ENCODE measurements at regions of chr3 and their contacts with region 1.

Region 1: DNA sequence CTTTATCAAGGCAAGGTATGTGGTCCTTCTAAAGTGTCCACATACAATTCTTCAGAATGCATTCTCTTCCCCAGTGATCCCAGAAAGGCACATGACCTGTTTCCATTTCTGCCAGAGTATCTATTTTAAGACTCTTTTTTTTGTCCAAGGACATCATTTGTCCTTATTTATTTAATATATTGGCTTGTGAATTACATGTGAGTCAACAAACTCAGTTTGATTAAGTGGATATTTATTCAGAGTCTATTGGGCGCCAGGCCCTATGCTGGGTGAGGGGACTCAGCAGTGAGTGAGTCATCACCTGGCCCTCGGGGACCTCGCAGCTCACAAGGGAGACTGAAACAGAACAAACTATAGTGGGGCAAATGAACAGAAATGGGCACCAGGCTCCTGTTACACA is 136.8 kb downstream of the SNRK start:
- DNase-seq: peak; percentile 23 to 27
- ATAC-seq: peak in 6 of 8 donors; percentile 33 to 58 (median 46)
- H3K4me3 ChIP-seq: no peak overlapping the region
- H3K27ac ChIP-seq: peak overlapping the region in 9 of 10 donors; percentile 8 to 93 (median 80)
- H3K4me1 ChIP-seq: peaks cover 2 to 57% (median 33%) of the 10 kb centered on the region in 9 donors
- H3K27me3 ChIP-seq: no peaks in the 10 kb centered on the region
- CTCF ChIP-seq: no peak

Region 2: GRCh38 chr3:43309372-43310305 is 113.5 kb before region 1 on chr3:
- intact Hi-C with region 1: loop called in 1 of 10 experiments (anchors 10 kb)
- DNase-seq: no peak
- ATAC-seq: no peak
- H3K4me3 ChIP-seq: no peak overlapping the region
- H3K27ac ChIP-seq: no peak overlapping the region
- H3K4me1 ChIP-seq: peaks cover 0 to 65% (median 25%) of the 10 kb centered on the region in 9 donors
- H3K27me3 ChIP-seq: no peaks in the 10 kb centered on the region
- CTCF ChIP-seq: no peak

Region 3: DNA sequence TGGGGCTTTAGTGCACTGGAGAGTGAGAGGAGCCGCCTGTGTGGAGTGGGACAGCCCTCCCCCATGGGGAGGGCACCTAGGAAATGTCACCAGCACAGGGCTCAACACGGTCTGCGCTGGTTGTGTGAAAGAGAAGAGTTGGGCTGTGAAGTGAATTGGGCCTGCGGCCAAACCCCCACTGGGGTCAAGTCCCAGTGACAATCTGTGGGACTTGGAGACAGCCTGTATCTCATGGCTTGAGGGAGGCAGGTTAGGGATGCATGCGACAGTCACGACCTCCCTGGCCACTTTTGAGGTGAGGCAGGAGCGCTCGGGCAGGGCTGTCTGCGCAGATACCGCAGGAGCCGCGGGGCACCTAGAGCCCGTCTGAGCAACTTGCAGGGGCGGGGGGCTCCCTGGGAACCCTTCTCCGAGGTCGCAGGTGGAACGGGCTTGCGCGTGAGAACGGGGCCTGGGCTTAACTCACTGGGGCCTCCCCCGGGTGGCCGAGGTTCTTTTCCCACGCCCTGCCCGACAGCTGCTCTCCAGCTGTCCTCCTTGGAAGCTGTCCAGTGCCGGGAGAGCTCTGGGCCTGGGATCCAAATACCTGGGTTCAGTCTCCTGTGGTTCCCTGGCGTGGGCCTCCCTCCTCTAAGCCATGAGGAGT is 59.4 kb before region 1 on chr3:
- intact Hi-C with region 1: loop called in 1 of 10 experiments (anchors 2 kb)
- DNase-seq: peak; percentile 75 to 76
- ATAC-seq: peak; percentile 60 to 79 (median 66)
- H3K4me3 ChIP-seq: no peak overlapping the region
- H3K27ac ChIP-seq: peak overlapping the region in 9 of 10 donors; percentile 24 to 79 (median 61)
- H3K4me1 ChIP-seq: peaks cover 3 to 45% (median 15%) of the 10 kb centered on the region in 9 donors
- H3K27me3 ChIP-seq: no peaks in the 10 kb centered on the region
- CTCF ChIP-seq: no peak

Region 4: DNA sequence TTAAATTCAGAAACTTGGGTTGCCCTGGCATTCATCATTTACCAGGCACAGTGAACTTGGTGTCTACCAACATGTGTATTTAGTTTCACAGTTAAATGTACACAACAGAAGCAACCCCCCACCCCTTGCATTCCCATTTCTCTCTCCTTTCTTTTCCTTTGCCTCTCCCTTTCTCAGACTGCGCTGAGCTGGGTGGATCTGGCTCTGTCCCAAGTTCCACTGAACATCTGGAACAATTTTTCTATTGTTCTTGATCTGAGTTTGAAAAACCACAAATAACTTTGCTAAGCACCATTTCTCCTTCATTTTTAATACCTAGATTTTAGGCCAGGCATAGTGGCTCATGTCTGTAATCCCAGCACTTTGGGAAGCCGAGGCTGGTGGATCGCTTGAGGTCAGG is 509.8 kb after region 1 on chr3:
- intact Hi-C with region 1: no loop called
- DNase-seq: no peak
- ATAC-seq: no peak
- H3K4me3 ChIP-seq: no peak overlapping the region
- H3K27ac ChIP-seq: no peak overlapping the region
- H3K4me1 ChIP-seq: no peaks in the 10 kb centered on the region
- H3K27me3 ChIP-seq: no peaks in the 10 kb centered on the region
- CTCF ChIP-seq: no peak